Activated T-helper 2 cell treated with anti-CD3 and anti-CD28 coated beads, Interferon-gamma antibody, Interleukin-2, Interleukin-4, amounts not matched to agents 10 μg/mL and 5 μg/mL and 100 μg/mL, durations not matched to agents 14 hours and 24 hours and 36 hours (primary cell): ENCODE measurements at regions of chr6 and their contacts with region 1.

Region 1: GRCh38 chr6:139291813-139292619 is at the start of gene TXLNB:
- DNase-seq: peak; percentile 81
- H3K4me3 Mint-ChIP-seq: peak within 1 kb of the TSS; percentile 76
- H3K27ac Mint-ChIP-seq: peak within 1 kb of the TSS; percentile 99
- H3K4me1 Mint-ChIP-seq: peaks cover 40% of the 10 kb centered on the region
- H3K27me3 Mint-ChIP-seq: no peaks in the 10 kb centered on the region
- total RNA-seq, gene TXLNB: 0.05 TPM in 1 of 2 replicates, not detected in the other

Region 2: GRCh38 chr6:139124887-139125672 is 166.9 kb before region 1 on chr6:
- intact Hi-C with region 1: loop called (anchors 1 kb)
- DNase-seq: peak; percentile 76
- H3K4me3 Mint-ChIP-seq: peak overlapping the region; percentile 43
- H3K27ac Mint-ChIP-seq: peak overlapping the region; percentile 95
- H3K4me1 Mint-ChIP-seq: peaks cover 38% of the 10 kb centered on the region
- H3K27me3 Mint-ChIP-seq: no peaks in the 10 kb centered on the region

Region 3: DNA sequence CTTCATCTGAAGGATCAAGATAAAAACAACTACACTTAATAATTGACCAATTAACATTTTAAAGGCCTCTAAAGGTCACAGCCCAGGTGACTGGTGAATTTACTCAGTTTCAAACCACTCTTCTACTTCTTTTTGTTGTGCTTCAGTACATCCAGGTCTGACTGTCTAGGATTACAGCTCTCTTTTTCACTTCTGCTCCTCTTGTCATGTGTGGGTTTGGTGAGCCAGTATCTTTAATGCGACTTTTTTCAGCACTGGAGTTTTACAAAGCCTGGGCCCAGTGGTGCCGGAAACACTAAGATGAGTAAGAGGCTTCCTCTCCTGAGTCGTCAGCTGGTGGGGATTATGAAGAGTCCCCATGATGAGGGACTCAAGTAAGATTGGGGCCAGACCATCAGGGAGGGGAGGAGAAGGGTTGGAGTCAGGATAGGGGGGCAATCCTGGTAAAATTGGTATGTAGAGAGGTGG is 130.2 kb before region 1 on chr6:
- intact Hi-C with region 1: loop called (anchors 2 kb)
- DNase-seq: peak; percentile 65
- H3K4me3 Mint-ChIP-seq: peak overlapping the region; percentile 65
- H3K27ac Mint-ChIP-seq: peak overlapping the region; percentile 99
- H3K4me1 Mint-ChIP-seq: peaks cover 61% of the 10 kb centered on the region
- H3K27me3 Mint-ChIP-seq: no peaks in the 10 kb centered on the region

Region 4: DNA sequence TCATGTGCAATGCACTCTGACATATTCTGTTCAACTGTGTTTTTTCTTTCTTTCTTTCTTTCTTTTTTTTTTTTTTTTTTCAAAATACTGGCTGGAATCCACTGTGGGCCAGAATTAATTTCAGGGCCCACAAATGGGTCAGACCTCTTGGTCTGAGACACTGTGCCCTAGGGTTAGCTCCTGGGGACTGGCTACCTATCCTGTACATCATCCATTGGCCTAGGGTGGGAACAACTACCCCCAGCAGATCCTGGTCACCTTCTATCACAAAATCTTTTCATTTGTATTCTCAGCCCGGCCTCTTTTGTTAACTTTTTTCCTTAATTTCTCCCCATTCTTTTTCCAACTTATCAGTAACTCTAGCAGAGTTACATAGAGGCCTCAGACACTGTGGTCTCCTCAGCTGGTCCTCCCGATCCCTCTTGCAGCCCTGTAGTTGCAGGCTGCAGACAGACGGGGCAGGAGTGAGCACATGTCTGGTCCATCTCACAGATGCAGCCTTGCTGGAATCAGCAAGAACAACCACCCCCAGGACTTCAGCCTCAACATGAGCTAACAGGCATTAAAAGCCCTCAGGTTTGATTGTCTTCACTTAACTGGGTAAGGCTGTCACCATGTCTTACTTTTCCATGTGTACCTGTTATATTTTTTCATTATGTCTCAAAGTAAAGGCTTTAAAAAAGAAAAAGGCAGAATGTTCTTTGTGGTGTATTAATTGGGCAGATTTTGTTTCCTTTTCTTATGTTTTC is 41.5 kb before region 1 on chr6:
- intact Hi-C with region 1: loop called (anchors 1 kb)
- DNase-seq: peak; percentile 56
- H3K4me3 Mint-ChIP-seq: peak overlapping the region; percentile 48
- H3K27ac Mint-ChIP-seq: peak overlapping the region; percentile 70
- H3K4me1 Mint-ChIP-seq: peaks cover 37% of the 10 kb centered on the region
- H3K27me3 Mint-ChIP-seq: no peaks in the 10 kb centered on the region

Region 5: GRCh38 chr6:139278190-139278589 is 13.8 kb before region 1 on chr6:
- intact Hi-C with region 1: loop called (anchors 1 kb)
- DNase-seq: no peak
- H3K4me3 Mint-ChIP-seq: no peak overlapping the region
- H3K27ac Mint-ChIP-seq: no peak overlapping the region
- H3K4me1 Mint-ChIP-seq: peaks cover 26% of the 10 kb centered on the region
- H3K27me3 Mint-ChIP-seq: no peaks in the 10 kb centered on the region

Region 6: DNA sequence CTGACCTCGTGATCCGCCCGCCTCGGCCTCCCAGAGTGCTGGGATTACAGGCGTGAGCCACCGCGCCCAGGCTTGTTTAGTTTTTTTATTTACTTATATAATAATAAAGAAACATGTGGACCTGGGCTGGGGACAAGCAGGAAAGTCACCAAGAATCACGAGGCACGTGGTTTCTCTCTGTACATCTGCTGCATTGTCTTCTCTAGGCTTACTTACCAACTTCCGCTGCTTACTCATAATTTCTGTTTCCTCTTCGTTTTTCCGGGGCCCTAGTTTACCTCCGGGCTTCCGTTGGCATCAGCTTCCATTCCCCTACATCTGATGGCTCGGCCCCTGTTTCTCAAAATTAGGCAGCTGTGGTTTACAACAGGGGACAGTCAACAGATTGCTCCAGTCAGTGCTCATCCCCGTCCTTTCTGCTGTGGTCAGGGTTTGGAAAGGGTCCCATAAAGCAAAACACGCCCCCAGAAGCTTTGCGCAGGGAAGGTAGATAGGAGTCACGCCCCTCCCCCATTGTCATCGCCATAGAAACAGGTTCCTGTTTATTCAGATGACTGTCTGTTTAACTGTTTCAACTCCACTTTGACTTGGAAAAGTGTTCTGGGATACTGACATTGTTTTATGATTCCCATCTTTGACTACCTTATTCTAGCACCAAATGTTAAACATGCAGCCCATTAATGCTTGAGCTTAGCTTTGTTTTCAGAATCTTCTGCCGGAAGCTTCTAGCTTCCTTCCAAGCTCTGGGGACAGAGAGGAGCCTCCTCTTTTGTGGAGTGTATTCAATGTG is 31.7 kb after region 1 on chr6:
- intact Hi-C with region 1: loop called (anchors 1 kb)
- DNase-seq: peak; percentile 71
- H3K4me3 Mint-ChIP-seq: peak overlapping the region; percentile 69
- H3K27ac Mint-ChIP-seq: peak overlapping the region; percentile 95
- H3K4me1 Mint-ChIP-seq: peaks cover 19% of the 10 kb centered on the region
- H3K27me3 Mint-ChIP-seq: no peaks in the 10 kb centered on the region

Region 7: DNA sequence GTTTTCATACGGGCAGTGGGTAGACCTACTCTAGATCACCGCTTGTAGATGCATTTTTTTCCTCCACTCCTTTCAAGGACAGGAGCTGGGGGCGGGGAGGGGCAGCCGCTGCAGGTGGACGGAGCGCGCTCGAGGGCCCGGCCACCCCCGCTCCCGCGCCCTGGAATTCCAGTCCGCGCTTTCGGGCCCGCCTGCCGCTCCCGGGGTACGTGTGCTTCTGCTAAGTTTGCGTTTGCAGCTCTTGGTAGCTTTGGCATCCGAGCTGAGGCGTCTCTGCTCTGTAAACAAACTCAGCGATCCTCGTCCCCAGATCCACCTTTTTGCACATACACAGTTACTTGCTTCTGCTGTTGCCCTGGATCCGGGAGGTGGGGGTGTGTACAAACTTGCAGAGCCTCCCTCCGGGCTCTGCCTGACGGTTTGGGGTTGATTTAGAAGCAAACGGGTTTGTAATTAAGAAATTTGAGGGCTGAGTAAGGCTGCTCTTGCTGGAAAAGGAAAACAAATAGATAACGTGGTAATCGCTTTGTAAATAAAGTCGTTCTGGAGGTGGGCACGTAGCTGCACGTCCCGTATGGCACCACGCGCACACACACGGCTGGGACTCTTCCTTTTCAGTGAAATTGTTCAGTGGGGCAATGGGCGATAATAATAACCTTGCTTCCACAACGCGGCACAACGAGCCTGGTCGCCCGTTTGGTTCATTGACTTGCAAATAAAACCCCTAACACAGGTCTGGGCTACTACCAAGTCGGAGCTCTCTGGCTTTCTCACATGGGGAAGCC is 83.4 kb after region 1 on chr6:
- intact Hi-C with region 1: loop called (anchors 2 kb)
- DNase-seq: peak; percentile 83
- H3K4me3 Mint-ChIP-seq: peak overlapping the region; percentile 92
- H3K27ac Mint-ChIP-seq: peak overlapping the region; percentile 98
- H3K4me1 Mint-ChIP-seq: peaks cover 40% of the 10 kb centered on the region
- H3K27me3 Mint-ChIP-seq: no peaks in the 10 kb centered on the region